Activated naive CD4-positive, alpha-beta T cell treated with anti-CD3 and anti-CD28 coated beads for 36 hours (primary cell): ENCODE measurements at regions of chr6 and their contacts with region 1.

Region 1: DNA sequence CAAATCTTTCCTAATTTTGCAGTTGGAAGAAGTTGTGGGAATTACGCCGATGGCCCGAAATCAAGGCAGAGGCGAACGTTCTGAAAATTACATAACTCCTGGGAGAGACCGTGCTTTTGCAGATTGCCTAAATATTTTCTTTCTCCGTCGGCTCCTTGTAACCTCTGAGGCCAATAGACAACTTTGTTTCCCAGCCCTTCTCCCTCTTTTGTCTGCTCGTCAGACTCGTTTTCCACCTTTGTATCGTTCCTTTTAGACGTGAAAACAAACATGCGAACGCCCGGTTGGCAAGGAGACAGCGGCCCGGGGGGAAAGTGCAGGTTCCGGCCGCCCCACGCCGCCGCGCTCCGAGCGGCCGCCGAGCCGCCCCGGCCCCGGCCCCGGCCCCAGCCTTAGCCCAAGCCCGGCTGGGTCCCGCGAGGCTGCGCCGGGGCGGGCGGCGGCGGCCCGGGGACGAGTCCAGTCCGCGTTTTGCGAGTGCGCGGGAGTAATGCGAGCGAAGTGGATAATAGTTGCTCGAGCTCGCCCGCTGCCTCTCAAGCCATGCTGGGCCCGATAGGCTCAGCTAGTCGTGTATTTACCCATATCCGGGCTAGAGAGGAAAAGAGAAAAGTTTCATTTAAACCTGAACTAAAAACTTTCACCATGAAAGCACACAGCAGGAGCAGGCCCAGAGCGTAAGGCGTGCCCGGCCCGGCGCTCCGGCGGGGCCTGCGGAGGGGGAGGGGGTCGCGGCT is at the start of gene ARID1B:
- DNase-seq: peak; percentile 71
- H3K4me3 Mint-ChIP-seq: peak within 1 kb of the TSS; percentile 87
- H3K27ac Mint-ChIP-seq: peak within 1 kb of the TSS; percentile 99
- H3K4me1 Mint-ChIP-seq: peaks cover 14% of the 10 kb centered on the region
- H3K27me3 Mint-ChIP-seq: no peaks in the 10 kb centered on the region
- total RNA-seq, gene ARID1B: 42.5 to 43.2 TPM

Region 2: DNA sequence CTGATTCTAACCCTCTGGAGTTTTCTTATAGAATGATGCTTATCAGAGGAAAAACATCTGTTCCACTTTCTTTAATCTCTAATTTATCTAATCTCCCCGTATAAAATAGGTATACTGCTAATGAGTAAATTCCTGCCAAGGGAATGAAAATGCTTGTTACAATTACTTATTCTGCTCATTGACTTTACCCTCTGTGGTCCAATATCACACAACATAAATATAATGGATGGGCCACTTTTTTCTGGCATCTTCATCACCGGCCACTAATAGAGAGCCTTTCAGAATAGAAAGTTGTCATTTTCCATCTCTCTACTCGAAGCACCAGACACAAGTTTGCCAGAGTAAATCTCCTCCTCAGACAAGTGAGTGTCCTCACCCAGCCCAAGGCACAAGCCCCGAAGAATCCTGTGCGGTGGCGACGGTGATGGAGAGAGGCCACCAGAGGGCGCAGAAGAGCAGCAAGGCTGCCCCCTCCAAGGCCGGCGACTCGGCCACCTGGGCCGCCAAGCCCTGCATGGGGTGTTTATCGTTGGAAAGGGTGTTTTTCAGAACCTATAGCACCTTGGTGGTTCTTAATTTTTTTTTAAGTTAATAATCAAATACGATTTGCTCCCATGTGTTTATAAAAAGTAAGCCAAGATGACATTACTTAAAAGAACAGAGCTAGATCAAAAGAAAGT is 212.7 kb before region 1 on chr6:
- CTCF ChIA-PET with region 1: interaction called, 3 read pairs
- intact Hi-C with region 1: loop called (anchors 2 kb)
- DNase-seq: peak; percentile 86
- H3K4me3 Mint-ChIP-seq: no peak overlapping the region
- H3K27ac Mint-ChIP-seq: no peak overlapping the region
- H3K4me1 Mint-ChIP-seq: peaks cover 5% of the 10 kb centered on the region
- H3K27me3 Mint-ChIP-seq: peaks cover 2% of the 10 kb centered on the region

Region 3: DNA sequence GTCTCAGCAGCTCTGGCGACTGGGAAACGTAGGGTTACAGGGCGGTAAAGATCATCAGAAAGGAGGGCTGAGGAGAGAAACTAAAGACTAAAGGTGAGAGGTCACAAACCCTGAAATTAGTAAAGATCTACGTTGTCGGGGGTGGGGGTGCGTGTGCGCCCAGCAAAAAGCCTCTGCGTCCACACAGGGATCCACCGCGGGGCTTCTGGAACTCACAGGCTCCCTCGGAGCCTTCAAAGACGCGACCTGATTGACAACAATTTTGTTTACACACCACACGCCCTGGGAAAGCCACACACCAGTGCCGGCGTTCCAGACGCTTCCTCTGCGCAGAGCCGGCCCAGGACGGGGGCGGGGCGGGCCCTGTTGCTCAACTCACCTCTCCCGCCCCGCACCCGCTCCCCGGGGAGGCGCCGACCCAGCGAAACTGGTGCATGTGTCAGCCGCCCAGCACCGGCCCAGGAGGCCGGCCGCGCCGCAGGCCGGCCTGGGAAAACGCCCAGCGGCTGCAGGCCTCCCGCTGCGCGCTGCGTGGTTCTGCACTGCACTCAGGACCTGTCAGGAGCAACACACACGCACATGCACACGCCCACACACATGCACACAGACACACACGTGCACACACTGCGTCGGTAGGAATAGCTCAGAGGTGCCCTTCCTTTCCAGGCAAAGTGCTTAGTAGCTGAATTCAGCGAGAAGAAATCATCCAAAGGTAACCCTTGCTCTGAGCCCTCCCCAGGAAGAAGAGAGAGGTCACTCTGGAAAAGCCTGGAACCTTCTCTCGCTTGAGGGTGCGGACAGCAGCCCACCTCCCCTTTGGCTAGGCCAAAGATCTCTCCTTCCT is 57.1 kb before region 1 on chr6:
- CTCF ChIA-PET with region 1: no interaction called
- intact Hi-C with region 1: loop called (anchors 2 kb)
- DNase-seq: peak; percentile 73
- H3K4me3 Mint-ChIP-seq: peak overlapping the region; percentile 70
- H3K27ac Mint-ChIP-seq: peak overlapping the region; percentile 24
- H3K4me1 Mint-ChIP-seq: peaks cover 16% of the 10 kb centered on the region
- H3K27me3 Mint-ChIP-seq: no peaks in the 10 kb centered on the region

Region 4: DNA sequence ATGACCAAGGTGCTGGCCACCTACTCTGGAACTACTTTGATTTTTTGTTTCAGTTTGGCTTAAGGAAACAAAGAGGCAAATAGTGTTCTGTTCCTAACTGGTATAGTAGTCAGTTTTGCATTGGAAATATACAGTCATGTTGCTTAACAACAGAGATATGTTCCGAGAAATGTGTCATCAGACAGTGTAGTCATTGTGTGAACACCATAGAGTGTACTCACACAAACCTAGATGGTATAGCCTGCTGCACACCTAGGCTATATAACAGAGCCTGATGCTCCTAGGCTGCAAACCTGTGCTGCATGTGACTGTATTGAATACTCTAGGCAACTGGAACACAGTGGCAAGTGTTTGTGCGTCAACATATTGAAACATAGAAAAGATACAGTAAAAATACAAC is 80.6 kb after region 1 on chr6:
- CTCF ChIA-PET with region 1: interaction called, 3 read pairs
- intact Hi-C with region 1: loop called (anchors 1 kb)
- DNase-seq: peak; percentile 57
- H3K4me3 Mint-ChIP-seq: no peak overlapping the region
- H3K27ac Mint-ChIP-seq: peak overlapping the region; percentile 89
- H3K4me1 Mint-ChIP-seq: peaks cover 77% of the 10 kb centered on the region
- H3K27me3 Mint-ChIP-seq: no peaks in the 10 kb centered on the region

Region 5: GRCh38 chr6:157021344-157021992 is 244.5 kb after region 1 on chr6:
- CTCF ChIA-PET with region 1: no interaction called
- intact Hi-C with region 1: loop called (anchors 1 kb)
- DNase-seq: peak; percentile 90
- H3K4me3 Mint-ChIP-seq: peak overlapping the region; percentile 92
- H3K27ac Mint-ChIP-seq: peak overlapping the region; percentile 99
- H3K4me1 Mint-ChIP-seq: peaks cover 64% of the 10 kb centered on the region
- H3K27me3 Mint-ChIP-seq: no peaks in the 10 kb centered on the region

Region 6: DNA sequence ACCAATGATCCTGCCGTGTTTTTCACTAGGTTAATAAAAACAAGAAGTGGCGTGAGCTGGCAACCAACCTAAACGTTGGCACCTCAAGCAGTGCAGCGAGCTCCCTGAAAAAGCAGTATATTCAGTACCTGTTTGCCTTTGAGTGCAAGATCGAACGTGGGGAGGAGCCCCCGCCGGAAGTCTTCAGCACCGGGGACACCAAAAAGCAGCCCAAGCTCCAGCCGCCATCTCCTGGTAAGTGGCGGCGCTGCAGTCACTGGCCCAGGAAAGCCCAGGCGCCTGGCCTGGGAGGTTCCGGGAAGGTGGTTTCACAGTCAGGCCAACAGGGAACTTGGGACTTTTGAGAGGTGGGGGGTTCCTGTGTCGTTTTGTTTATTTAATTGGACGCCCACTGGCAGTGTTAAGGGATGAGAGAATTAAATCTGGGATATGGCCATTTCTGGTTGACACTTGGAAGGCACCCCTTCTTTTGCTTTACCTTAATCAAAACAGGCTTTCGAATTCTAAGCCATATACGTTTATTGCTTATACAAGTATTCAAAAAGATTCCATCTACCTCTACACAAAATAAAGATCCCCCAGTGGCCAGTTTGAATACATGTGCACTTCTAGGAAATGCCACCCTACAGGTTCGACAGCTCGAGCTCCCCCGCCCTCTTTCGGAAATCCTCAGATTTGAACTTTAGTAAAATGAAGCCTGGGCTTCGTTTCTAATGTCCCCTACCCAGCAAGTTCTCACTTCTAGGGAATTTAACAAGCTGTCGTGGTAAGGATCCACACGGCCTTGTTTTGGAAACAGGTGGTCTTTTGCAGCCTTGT is 407.4 kb after region 1 on chr6:
- CTCF ChIA-PET with region 1: no interaction called
- intact Hi-C with region 1: loop called (anchors 5 kb)
- DNase-seq: peak; percentile 69
- H3K4me3 Mint-ChIP-seq: no peak overlapping the region
- H3K27ac Mint-ChIP-seq: no peak overlapping the region
- H3K4me1 Mint-ChIP-seq: peaks cover 10% of the 10 kb centered on the region
- H3K27me3 Mint-ChIP-seq: no peaks in the 10 kb centered on the region